ENCODE measurements at regions of chr11 and their contacts with region 1.

Region 1: DNA sequence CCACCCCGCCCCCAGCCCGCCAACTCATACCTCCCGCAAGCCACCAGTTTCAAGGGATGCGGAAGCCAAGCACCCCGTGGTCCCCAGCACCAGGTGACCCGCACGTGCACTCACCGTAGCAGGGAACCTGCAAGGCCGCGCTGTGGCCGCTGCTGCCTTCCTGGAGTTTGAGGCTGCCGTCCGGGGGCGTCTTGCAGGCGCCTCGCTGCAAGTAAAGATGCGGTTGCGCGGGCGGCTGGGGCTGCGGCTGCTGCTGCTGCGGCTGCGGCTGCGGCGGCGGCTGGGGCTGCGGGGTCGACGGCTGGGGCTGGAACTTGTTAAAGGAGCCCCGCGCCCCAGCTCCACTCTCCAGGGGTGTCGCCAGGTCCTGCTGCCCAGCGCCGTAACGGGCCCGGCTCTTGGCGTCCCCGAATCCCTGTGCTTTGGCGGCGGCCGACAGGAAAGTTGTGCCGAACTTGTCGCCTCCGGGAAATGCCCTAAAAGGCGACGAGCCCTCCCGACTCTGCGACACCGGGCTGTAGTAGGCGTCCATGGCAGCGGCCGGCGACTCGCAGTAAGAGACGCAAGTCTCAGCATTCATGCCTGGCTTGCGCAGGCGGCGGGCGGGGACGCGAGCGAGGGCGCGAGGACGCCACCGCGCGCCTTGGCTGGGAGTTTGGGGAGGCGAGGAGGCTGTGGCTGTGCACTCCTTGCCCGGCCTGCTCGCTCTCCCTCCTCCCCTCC is at the start of gene ALX4:
- DNase-seq: no peak
- ATAC-seq: no peak
- H3K4me3 ChIP-seq: peak within 1 kb of the TSS in 1 of 3 experiments; percentile 37; a peak in 1 of 6 replicates
- H3K27ac ChIP-seq: no peak within 1 kb of the TSS
- H3K4me1 ChIP-seq: no peaks in the 10 kb centered on the region; the same call in 1 of the 2 replicates
- H3K27me3 ChIP-seq: peaks cover 14 to 89% of the 10 kb centered on the region in 2 experiments
- CTCF ChIP-seq: no peak
- EP300 ChIP-seq: no peak
- POLR2A ChIP-seq: no peak
- RAD21 ChIP-seq: no peak
- total RNA-seq, gene ALX4: not detected in 2 replicates

Region 2: DNA sequence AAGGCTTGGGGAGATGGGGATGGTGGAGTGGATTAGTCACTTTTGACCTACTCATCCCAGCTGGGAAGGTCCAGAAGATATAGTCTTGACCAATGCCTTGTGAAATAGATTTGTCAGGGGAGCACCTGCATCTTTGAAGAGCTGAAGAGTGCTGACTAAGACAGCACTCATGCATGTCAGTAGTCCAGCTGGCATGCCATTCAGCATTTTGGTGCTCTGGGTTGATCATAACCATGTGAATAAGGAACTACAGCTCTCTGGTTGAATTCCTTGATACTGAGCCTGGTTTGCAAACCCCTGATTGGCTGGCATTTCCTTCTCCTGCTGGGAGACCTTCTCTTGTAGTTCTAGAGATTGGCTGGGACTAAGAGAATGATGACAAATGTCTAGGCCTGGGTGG is 107.1 kb after region 1 on chr11:
- CTCF ChIA-PET with region 1: no interaction called
- POLR2A ChIA-PET with region 1: no interaction called
- in situ Hi-C with region 1: loop called (anchors 25 kb)
- intact Hi-C with region 1: no loop called
- DNase-seq: no peak
- ATAC-seq: no peak
- H3K4me3 ChIP-seq: no peak overlapping the region
- H3K27ac ChIP-seq: no peak overlapping the region
- H3K4me1 ChIP-seq: no peaks in the 10 kb centered on the region
- H3K27me3 ChIP-seq: peaks cover 1 to 7% of the 10 kb centered on the region in 2 experiments; a peak in 1 of 5 replicates
- CTCF ChIP-seq: no peak
- EP300 ChIP-seq: no peak
- POLR2A ChIP-seq: no peak
- RAD21 ChIP-seq: no peak

Region 3: DNA sequence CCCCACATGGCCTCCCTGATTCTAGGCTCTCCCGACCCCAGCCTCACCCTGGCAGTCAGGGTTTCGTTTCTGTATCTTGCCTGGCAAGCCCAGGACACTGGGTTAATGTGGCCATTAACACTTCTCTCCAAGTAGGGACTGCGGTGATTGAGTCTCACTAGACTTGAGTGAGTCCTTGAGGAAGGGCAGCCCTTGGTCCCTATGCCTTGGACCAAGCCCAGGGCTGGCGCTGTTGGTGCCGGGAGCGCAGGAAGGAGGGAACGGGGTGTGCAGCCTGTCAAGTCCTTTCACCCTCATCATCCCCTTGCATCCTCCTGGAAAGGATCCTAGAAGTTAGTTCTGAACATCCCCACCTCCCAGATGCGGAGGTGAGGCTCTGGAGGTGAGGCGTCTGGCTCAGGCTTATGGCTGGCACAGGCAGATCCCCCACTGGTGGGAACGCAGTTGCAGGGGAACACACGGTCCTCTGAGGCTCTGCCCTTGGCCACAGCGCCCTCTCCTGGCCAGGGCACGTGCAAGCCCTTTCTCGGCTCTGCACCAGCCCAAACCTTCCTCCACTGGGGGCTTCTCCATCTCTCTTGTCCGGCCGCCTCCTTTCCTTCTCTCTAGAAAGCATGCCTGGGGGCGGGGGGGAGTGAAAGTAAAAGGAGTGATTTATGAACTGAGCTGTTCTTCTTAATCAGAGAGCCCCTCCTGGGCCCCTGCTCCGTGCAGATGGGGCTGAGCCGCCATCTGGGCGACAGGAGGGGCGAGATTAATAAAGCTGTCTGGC is 584.4 kb after region 1 on chr11:
- CTCF ChIA-PET with region 1: no interaction called
- POLR2A ChIA-PET with region 1: no interaction called
- in situ Hi-C with region 1: loop called (anchors 25 kb)
- intact Hi-C with region 1: no loop called
- DNase-seq: peak; percentile 24
- ATAC-seq: peak; percentile 96
- H3K4me3 ChIP-seq: no peak overlapping the region
- H3K27ac ChIP-seq: no peak overlapping the region
- H3K4me1 ChIP-seq: no peaks in the 10 kb centered on the region
- H3K27me3 ChIP-seq: peaks cover 0 to 1% of the 10 kb centered on the region in 2 experiments; a peak in 1 of 5 replicates
- CTCF ChIP-seq: peak; percentile 86
- EP300 ChIP-seq: no peak
- POLR2A ChIP-seq: no peak
- RAD21 ChIP-seq: peak; percentile 70; the same call in 1 of the 2 replicates

Measured in HepG2 (cell line).